GM13977 (cell line): ENCODE measurements at regions of chr1 and their contacts with region 1.

Region 1: GRCh38 chr1:46340404-46341221 is at the start of gene NSUN4:
- DNase-seq: peak; percentile 80
- CTCF ChIP-seq: peak; percentile 76

Region 2: GRCh38 chr1:46289976-46290375 is 50.6 kb before region 1 on chr1:
- in situ Hi-C with region 1: loop called (anchors 10 kb)
- DNase-seq: no peak
- CTCF ChIP-seq: no peak